ENCODE measurements at regions of chr12 and their contacts with region 1.

Region 1: GRCh38 chr12:76031537-76032073 is at the start of gene PHLDA1:
- DNase-seq: peak; percentile 96
- ATAC-seq: peak; percentile 93
- H3K4me3 ChIP-seq: peak within 1 kb of the TSS; percentile 82
- H3K27ac ChIP-seq: peak within 1 kb of the TSS; percentile 98
- H3K4me1 ChIP-seq: peaks cover 10% of the 10 kb centered on the region
- H3K27me3 ChIP-seq: no peaks in the 10 kb centered on the region
- CTCF ChIP-seq: peak; percentile 71
- total RNA-seq, gene PHLDA1: 16.2 TPM

Region 2: GRCh38 chr12:75526655-75527511 is 504.7 kb before region 1 on chr12:
- intact Hi-C with region 1: loop called (anchors 10 kb)
- DNase-seq: no peak
- ATAC-seq: peak; percentile 64
- H3K4me3 ChIP-seq: no peak overlapping the region
- H3K27ac ChIP-seq: no peak overlapping the region
- H3K4me1 ChIP-seq: no peaks in the 10 kb centered on the region
- H3K27me3 ChIP-seq: no peaks in the 10 kb centered on the region
- CTCF ChIP-seq: peak; percentile 70

Measured in upper lobe of right lung (tissue), 1 donor.